Prostate gland (tissue), 2 donors: ENCODE measurements at regions of chr18 and their contacts with region 1.

Region 1: GRCh38 chr18:41587976-41588375 is 367.1 kb upstream of the PIK3C3 start:
- DNase-seq: no peak
- H3K4me3 ChIP-seq: no peak overlapping the region
- H3K27ac ChIP-seq: no peak overlapping the region
- H3K4me1 ChIP-seq: no peaks in the 10 kb centered on the region
- H3K27me3 ChIP-seq: no peaks in the 10 kb centered on the region
- CTCF ChIP-seq: no peak
- POLR2A ChIP-seq: no peak

Region 2: GRCh38 chr18:40612356-40612755 is 975.6 kb before region 1 on chr18:
- intact Hi-C with region 1: no loop called
- DNase-seq: no peak
- H3K4me3 ChIP-seq: no peak overlapping the region
- H3K27ac ChIP-seq: no peak overlapping the region
- H3K4me1 ChIP-seq: no peaks in the 10 kb centered on the region
- H3K27me3 ChIP-seq: no peaks in the 10 kb centered on the region
- CTCF ChIP-seq: no peak
- POLR2A ChIP-seq: no peak

Region 3: DNA sequence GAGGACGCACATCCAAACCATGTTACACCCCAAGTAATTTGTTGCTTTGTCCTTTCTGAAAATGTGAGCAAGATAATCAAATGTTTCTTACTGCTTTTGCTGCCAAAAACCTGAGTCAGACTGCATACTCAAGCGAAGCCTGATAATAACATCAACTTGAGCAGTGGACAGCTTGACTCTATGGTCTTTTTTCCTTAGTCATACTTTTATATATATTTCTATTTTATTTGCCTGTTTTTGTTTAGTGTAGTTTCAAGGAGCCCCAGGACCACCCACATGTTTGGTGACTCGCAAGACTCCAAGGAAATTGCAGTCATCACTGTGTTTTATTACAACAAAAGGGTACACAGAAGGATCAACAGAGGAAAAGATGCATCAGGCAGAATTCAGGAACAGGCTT is 321.4 kb before region 1 on chr18:
- intact Hi-C with region 1: loop called (anchors 5 kb)
- DNase-seq: no peak
- H3K4me3 ChIP-seq: no peak overlapping the region
- H3K27ac ChIP-seq: no peak overlapping the region
- H3K4me1 ChIP-seq: no peaks in the 10 kb centered on the region
- H3K27me3 ChIP-seq: no peaks in the 10 kb centered on the region
- CTCF ChIP-seq: no peak
- POLR2A ChIP-seq: no peak

Region 4: DNA sequence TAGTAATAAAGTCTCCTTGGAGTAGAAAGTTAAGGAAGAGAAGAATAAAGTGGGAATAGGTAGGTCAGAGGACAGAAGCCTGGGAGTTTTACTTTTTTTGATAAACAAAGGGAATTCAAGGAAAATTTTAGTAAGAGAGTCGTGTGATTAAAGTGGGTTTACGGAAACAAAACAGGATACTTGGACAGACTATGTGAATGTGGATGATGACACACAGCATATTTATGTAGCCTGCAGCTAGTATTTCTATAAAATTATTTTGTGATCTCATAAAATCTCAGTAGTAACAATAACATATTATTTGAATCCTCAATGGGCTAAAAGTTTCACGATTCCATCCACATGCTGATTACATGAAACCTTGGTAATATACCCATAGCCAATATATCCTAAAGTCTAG is 83.7 kb before region 1 on chr18:
- intact Hi-C with region 1: no loop called
- DNase-seq: no peak
- H3K4me3 ChIP-seq: no peak overlapping the region
- H3K27ac ChIP-seq: no peak overlapping the region
- H3K4me1 ChIP-seq: no peaks in the 10 kb centered on the region
- H3K27me3 ChIP-seq: no peaks in the 10 kb centered on the region
- CTCF ChIP-seq: no peak
- POLR2A ChIP-seq: no peak

Region 5: GRCh38 chr18:41545091-41545888 is 42.7 kb before region 1 on chr18:
- intact Hi-C with region 1: no loop called
- DNase-seq: no peak
- H3K4me3 ChIP-seq: no peak overlapping the region
- H3K27ac ChIP-seq: no peak overlapping the region
- H3K4me1 ChIP-seq: no peaks in the 10 kb centered on the region
- H3K27me3 ChIP-seq: no peaks in the 10 kb centered on the region
- CTCF ChIP-seq: no peak
- POLR2A ChIP-seq: no peak

Region 6: DNA sequence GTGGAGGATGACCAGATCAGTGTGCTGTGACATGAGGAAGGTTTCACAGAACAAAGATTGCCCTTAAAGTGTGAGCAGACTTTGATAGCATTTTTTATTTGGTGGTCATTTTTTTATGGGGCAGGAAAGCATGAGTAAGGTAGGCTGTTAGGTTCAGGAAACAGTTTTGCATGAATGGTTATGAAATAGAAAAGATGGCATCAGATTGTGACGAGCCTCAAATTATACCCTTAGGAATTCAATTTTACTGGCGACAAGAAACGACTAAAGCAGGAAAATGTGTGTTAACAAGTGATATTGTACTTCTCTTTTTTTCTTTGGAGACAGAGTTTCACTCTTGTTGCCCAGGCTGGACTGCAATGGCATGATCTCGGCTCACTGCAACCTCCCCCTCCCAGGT is 411.8 kb after region 1 on chr18:
- intact Hi-C with region 1: no loop called
- DNase-seq: no peak
- H3K4me3 ChIP-seq: no peak overlapping the region
- H3K27ac ChIP-seq: no peak overlapping the region
- H3K4me1 ChIP-seq: no peaks in the 10 kb centered on the region
- H3K27me3 ChIP-seq: no peaks in the 10 kb centered on the region
- CTCF ChIP-seq: no peak
- POLR2A ChIP-seq: no peak